ENCODE measurements at regions of chr18 and their contacts with region 1.

Region 1: DNA sequence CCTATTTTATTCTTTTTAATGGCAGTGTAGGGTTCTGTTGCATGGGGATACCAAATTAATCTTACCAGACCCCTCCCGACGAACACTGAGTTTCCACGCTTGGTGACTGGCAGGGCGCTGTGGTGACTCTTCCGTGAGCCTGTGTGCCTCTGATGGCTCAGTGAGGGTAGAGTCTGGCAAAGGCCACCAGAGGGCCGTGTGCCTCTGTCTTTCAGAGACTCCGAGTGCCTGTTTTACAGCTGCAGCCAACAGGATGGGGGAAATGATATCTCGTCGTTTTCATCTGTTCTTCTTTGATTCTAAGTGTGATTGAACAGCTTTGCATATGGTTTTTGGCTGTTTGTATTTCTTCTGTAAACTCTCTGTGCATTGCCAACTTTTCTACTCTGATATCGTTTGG is 99.8 kb downstream of the ZNF236 start:
- DNase-seq: peak; percentile 83
- H3K4me3 ChIP-seq: no peak overlapping the region
- H3K27ac ChIP-seq: no peak overlapping the region
- H3K4me1 ChIP-seq: no peaks in the 10 kb centered on the region
- H3K27me3 ChIP-seq: no peaks in the 10 kb centered on the region
- CTCF ChIP-seq: peak; percentile 41
- EP300 ChIP-seq: no peak
- RAD21 ChIP-seq: peak; percentile 92

Region 2: GRCh38 chr18:76803814-76804213 is 118.3 kb before region 1 on chr18:
- CTCF ChIA-PET with region 1: interaction called, 20 read pairs
- POLR2A ChIA-PET with region 1: no interaction called
- DNase-seq: peak; percentile 77
- H3K4me3 ChIP-seq: peak overlapping the region in 1 of 2 experiments; percentile 38; a peak in 1 of 4 replicates
- H3K27ac ChIP-seq: no peak overlapping the region
- H3K4me1 ChIP-seq: peaks cover 0 to 7% of the 10 kb centered on the region in 2 experiments; a peak in 2 of 4 replicates
- H3K27me3 ChIP-seq: no peaks in the 10 kb centered on the region
- CTCF ChIP-seq: peak; percentile 85
- EP300 ChIP-seq: no peak
- RAD21 ChIP-seq: peak; percentile 64

Region 3: DNA sequence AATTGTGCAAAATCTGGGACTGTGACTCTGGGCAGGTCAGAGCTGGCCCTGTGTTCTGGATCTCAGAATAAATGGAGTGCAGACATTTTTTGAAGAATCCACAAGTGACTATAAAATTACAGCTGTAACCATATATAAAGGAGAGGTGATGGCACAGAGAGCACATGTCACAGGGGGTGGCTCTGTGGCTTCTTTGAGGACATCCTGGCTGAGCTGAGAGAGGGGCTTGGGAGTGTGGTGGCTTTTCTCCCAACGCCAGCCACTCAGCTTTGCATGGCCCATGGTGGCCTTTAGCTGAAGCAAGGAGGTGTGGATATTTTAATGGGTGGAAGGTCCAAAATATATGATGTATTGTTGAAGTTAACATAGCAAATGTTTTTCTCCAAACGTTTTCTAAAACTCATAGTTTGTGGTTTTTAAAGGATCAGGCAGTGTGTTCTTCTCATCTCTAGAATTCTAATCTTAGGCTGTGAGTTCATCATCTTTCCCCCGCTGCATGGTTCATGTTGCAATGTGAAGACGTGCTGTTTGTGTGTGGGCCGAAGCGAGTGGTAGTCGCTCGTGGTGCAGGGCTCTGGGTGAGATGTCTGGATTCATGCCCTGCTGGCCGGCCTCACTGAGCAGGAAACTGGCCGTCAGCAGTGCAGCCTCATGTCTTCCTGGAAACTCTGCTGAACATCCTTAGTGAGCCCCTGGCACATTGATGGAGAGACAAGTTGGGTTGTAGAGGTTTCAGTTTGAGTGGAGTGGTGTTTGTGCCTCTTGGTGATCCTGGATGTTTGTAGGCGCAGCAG is 10.1 kb after region 1 on chr18:
- CTCF ChIA-PET with region 1: interaction called, 64 read pairs
- POLR2A ChIA-PET with region 1: no interaction called
- DNase-seq: no peak
- H3K4me3 ChIP-seq: no peak overlapping the region
- H3K27ac ChIP-seq: no peak overlapping the region
- H3K4me1 ChIP-seq: no peaks in the 10 kb centered on the region
- H3K27me3 ChIP-seq: no peaks in the 10 kb centered on the region
- CTCF ChIP-seq: no peak
- EP300 ChIP-seq: no peak
- RAD21 ChIP-seq: no peak

Region 4: DNA sequence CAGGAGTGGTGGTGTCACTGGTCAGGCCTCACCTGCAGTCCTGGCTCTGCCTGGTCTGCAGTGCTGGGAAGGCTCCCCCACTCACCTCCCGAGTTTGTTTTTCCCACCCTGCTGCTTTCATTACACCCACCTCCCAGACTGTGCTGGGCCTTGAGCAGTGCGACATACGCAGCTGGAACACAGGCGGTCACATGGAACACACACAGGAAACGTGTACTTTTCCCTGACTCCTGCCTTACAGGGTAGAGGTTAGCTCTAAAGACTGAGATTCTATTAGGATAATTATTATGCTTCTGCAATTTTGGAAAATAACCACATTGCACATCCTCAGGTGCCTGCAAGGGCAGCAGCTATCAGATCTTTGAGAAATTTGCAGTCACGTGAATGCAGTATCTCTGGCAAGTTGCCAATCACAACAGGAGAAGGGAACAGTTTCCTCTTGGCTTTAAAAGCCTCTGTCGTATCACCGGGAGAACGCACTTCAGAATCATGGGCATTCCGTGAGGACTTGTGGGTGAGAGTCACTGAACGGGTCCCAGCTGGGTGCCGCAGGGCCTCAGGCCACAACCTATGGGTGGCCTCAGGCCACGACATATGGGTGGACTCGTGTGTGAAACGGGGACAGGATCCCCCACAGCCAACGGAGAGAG is 36.7 kb after region 1 on chr18:
- CTCF ChIA-PET with region 1: interaction called, 13 read pairs
- POLR2A ChIA-PET with region 1: no interaction called
- DNase-seq: peak; percentile 75
- H3K4me3 ChIP-seq: no peak overlapping the region
- H3K27ac ChIP-seq: peak overlapping the region in 1 of 2 experiments; percentile 67; a peak in 2 of 4 replicates
- H3K4me1 ChIP-seq: peaks cover 0 to 17% of the 10 kb centered on the region in 2 experiments; a peak in 2 of 4 replicates
- H3K27me3 ChIP-seq: no peaks in the 10 kb centered on the region
- CTCF ChIP-seq: no peak
- EP300 ChIP-seq: 0 out of 4 replicates have a peak, but pooled peaks of 1 of the 2 experiments have one; percentile 32
- RAD21 ChIP-seq: no peak

Region 5: DNA sequence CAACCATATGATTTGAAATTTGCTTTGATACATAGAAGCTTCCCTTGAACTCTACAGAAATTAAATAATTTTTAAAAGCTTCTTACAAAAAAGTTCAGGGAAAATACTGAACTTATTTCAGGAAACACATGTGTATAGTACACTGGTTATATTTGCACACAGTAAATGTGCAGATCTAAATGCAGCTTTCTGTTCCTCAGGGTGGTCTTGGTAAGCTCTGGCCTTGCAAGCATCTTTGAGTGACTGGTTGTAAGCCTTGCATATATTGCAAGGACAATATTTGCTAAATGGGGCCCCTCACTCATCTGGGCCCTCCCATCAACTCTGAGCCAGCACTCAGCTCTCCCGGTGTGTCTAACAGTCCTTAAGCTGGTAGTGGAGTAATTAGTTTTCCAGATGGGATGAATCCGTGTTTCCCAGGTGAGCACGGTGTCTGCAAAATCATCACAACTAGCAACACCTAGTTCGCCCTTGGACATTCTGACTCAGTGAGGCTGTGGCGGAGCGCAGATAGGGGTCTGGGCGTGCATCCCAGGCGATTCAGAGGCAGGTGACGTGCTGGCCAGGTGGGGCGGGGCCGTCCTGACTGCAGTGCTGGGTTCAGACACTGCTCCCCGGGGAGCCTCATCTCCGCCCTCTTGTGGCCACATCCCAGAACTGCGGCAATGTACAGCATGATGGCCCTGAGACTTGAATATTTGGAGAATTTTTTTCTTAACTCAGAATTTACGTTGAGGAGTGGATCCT is 60.9 kb after region 1 on chr18:
- CTCF ChIA-PET with region 1: interaction called, 191 read pairs
- POLR2A ChIA-PET with region 1: no interaction called
- DNase-seq: peak; percentile 90
- H3K4me3 ChIP-seq: peak overlapping the region in 1 of 2 experiments; percentile 45; a peak in 2 of 4 replicates
- H3K27ac ChIP-seq: no peak overlapping the region
- H3K4me1 ChIP-seq: peaks cover 0 to 11% of the 10 kb centered on the region in 2 experiments; a peak in 1 of 4 replicates
- H3K27me3 ChIP-seq: no peaks in the 10 kb centered on the region
- CTCF ChIP-seq: peak; percentile 93
- EP300 ChIP-seq: no peak
- RAD21 ChIP-seq: peak; percentile 76

Region 6: DNA sequence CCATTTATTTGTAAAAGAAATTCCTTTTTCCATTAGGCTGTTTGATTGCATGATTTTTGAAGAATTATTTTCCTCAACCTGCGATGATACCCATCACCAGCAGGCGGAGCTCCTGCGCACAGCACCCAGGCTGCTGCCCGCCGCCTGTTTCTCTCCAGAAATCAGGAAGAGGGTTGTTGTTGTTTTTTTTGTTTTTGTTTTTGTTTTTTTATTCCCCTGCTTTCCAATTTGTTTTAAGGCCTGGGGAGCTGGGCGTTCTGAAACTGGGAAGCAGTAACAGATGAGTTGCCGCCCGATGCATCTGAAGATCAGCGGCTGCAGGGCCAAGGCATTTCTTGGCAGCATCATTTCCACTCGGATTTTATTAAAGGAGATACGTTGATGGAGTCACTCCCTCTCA is 78.4 kb after region 1 on chr18:
- CTCF ChIA-PET with region 1: interaction called, 14 read pairs
- POLR2A ChIA-PET with region 1: no interaction called
- DNase-seq: peak; percentile 82
- H3K4me3 ChIP-seq: no peak overlapping the region; a peak in 1 of 4 replicates
- H3K27ac ChIP-seq: no peak overlapping the region
- H3K4me1 ChIP-seq: no peaks in the 10 kb centered on the region
- H3K27me3 ChIP-seq: peaks cover 4% of the 10 kb centered on the region; the same call in 1 of the 2 replicates
- CTCF ChIP-seq: peak; percentile 99
- EP300 ChIP-seq: no peak
- RAD21 ChIP-seq: peak; percentile 85

Region 7: DNA sequence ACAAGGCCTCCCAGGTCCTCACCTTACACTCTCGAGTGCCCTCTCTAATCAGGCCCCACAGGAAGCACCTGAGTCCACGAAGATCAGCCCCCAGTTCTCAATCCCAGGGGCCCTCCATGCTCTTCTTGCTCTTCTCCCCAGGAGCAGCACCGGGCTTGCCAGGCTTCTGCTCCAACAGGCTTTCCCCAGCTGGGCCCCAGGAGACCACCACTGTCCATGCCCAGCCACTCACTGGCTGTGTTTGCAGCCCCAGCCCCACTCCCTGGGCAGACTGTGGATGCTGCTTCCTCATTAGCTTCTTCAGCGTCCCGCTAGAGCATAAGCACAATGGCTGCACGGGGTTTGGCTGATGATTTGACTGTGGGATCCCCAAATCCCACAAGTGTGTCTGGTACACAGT is 1109.5 kb after region 1 on chr18:
- CTCF ChIA-PET with region 1: no interaction called
- POLR2A ChIA-PET with region 1: no interaction called
- DNase-seq: no peak
- H3K4me3 ChIP-seq: no peak overlapping the region
- H3K27ac ChIP-seq: no peak overlapping the region
- H3K4me1 ChIP-seq: no peaks in the 10 kb centered on the region
- H3K27me3 ChIP-seq: no peaks in the 10 kb centered on the region
- CTCF ChIP-seq: no peak
- EP300 ChIP-seq: no peak
- RAD21 ChIP-seq: no peak